ENCODE measurements at regions of chr15 and their contacts with region 1.

Region 1: DNA sequence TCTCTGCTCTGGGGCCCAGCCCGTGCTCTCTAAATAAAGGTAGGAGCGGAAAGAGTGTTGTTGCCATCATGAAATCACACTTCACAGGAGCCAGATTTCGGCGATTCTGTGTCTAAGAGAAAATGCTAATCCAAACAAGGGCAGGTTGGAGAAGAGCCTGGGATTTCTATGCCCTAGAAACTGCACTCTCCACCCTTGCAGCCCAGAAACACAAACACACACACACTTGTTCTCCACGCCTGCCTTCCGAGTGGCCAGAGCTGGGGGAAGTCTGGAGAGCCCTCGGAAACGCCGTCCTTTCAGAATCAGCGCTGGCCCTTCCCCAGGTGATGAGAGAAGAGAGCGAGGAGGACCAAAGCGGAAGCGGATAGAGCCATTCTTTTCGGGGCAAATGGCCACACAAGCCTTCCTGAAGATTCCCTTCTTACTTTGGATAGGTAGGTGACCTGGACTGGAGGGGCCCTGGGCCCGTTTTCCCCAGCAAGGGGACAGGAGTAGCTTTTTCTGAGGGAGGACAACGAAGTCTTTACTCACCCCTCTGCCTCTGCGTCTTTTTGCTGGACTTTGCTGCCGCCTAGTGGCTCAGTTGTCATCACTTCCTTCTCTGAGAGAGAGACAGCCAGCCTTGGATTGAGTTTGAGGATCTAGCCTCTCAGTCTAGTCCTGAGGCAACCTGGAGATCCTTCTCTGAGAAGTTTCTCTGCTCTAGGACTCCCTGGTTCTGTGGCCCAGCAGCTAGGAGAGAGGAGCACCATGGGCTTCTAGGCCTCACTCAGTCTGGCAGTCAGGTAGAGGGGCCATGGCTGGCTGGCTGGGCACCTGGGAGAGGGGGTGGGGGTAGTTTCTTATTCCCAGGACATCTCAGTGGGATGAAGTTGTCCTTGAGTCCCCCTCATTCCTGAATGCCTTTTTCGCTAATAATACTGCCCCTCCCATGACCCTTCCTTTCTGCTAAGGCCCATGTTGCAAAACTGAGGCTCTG is 37.7 kb downstream of the SENP8 start:
- DNase-seq: peak; percentile 95
- H3K4me3 ChIP-seq: peak overlapping the region; percentile 42
- H3K27ac ChIP-seq: peak overlapping the region; percentile 69
- H3K4me1 ChIP-seq: no peaks in the 10 kb centered on the region
- H3K27me3 ChIP-seq: no peaks in the 10 kb centered on the region
- CTCF ChIP-seq: peak; percentile 74

Region 2: DNA sequence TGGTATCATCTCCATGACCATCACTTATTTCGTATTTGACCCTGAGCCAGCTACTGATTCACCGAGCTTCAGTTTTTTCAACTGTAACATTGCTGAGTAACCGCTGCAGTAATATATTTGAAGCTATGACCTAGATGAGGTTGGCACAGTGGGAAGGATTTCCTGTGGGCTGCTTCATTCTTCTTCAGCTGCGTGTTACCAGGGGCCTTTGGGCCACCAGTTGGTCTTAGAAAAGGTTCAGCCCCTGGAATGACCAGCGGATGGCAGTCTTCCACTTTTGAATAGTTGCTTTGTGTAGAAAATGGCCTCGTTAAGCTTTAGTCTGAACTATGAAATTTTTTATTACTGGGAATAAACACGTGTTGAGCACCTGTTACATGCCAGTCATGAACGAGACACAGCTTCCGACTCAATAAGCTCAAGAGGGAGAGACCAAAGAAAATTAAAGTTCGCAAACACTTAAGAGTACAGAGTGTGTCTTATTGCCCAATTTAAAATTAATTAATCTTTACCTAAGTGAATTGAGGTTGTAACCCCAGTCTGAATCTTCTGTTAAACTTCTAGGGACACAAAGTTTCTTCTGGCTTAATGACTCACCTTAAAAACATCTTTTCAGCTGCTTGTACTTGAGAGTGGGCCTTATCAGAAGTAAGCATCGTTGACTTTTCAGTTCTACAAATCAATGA is 403.2 kb before region 1 on chr15:
- intact Hi-C with region 1: loop called (anchors 5 kb)
- DNase-seq: peak; percentile 83
- H3K4me3 ChIP-seq: no peak overlapping the region
- H3K27ac ChIP-seq: peak overlapping the region; percentile 48
- H3K4me1 ChIP-seq: peaks cover 7% of the 10 kb centered on the region
- H3K27me3 ChIP-seq: no peaks in the 10 kb centered on the region
- CTCF ChIP-seq: peak; percentile 49

Measured in colonic mucosa (tissue), 4 donors.